ENCODE measurements at regions of chr4 and their contacts with region 1.

Region 1: DNA sequence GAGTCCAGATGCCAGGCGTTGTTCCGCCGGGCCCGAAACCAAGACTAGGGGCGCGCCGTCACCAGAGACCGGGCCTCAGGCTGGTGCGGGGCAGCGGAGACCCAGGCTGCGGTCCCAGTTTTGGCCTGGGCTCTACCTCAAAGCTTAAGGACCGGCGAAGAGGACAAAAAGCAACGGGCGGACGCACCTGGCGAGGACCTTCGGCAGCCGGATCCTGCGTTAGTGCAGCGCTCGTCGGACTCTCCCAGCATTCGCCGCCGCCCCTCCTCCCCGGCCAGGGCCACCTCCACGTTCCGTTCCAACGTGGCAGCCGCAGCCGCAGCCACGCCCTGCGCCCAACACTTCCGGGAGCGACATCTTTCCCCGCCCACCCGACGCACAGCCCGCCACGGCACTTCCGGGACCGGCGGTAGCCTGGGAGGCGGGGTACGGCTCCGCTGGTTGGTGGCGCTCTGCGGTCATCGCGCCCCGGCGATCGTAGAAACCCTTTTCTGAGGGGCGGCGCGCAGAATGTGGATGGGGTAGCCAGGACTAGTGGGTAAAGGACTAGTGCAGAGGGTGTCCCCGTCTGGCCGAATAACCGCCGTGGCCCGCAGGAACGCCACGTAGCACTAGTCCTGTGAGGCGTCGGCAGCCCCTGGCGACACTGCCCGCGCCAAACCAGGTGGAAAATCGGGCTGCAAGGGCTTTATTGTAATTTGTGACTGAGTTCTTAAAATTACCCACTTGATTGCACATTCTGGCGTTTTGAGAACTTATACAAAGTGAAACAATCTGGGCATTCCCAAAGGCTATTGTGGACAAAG is at the start of gene SEC31A:
- DNase-seq: peak; percentile 97
- H3K4me3 ChIP-seq: peak within 1 kb of the TSS; percentile 55
- H3K27ac ChIP-seq: peak within 1 kb of the TSS; percentile 86
- H3K4me1 ChIP-seq: no peaks in the 10 kb centered on the region
- H3K27me3 ChIP-seq: no peaks in the 10 kb centered on the region
- CTCF ChIP-seq: no peak
- total RNA-seq, gene SEC31A: 158 to 188 TPM

Region 2: DNA sequence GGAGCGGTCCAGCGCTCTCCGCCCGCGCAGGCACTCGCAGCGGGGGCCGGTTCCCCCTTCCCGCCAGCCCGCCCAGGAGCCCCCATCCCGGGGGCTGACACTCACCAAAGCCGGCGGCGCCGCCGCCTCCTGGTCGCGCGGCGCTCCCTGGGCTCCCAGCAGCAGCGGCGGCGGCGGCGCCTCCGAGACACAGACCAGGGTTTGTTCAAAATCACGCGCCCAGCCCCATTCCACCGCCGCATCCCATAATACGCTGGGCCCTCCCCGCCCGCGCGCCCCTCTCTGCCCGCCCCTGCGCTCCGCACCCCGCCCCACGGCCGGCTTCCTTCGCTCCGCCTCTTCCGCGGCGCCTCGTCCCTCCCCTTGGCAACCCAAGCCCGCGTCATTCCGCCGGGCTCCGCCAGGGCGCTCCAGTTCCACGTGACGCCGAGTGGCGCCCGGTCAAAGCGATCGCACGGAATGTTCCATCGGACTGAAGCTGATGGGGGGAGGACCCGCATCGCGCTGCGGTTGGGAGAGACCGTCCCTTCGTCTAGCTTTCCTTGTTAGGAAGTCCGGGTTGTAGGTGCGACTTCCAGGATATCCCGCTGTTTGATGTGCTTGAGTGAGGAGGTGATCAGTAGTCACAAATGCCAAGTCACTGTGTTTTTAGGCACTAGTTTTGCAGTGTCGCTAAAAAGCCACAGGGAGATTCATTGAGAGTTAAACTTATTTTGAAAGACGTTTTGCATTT is 121.7 kb after region 1 on chr4:
- intact Hi-C with region 1: loop called (anchors 5 kb)
- DNase-seq: peak; percentile 98
- H3K4me3 ChIP-seq: peak overlapping the region; percentile 59
- H3K27ac ChIP-seq: peak overlapping the region; percentile 80
- H3K4me1 ChIP-seq: peaks cover 7% of the 10 kb centered on the region
- H3K27me3 ChIP-seq: no peaks in the 10 kb centered on the region
- CTCF ChIP-seq: peak; percentile 49